B cell (primary cell): ENCODE measurements at regions of chr1 and their contacts with region 1.

Region 1: DNA sequence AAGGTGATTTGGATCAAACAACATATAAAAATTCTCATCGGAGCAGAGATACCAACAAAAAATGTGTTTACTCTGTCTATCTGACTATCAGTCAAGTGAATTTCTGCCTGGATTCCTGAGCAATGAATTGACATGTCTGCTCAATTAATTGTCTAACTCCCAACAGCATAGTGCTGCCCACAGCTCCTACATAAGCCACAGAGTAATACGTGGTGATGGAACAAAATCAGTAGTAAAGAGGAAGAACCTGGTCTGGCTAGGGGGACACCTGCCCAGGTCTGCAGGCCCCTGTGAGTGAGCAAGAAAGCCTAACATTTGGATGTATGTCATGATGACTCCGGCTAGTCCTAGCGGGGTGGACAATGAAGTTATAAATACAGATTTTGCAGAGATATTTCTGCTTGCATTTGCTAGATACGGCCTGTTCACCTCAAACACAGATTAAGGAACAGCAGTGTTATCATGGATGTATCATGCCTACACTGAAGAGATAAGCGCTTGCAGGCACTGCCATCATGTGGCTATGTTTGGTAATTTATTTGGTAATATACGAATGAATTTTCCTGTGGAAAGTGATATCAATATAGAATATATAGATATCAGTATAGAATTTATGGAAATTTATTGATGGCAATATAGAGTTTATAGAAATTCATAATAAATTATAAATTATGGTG is 69.6 kb upstream of the LRRC8B start:
- DNase-seq: peak; percentile 66
- ATAC-seq: peak; percentile 71
- H3K4me3 ChIP-seq: no peak overlapping the region
- H3K4me3 Mint-ChIP-seq: no peak overlapping the region
- H3K27ac ChIP-seq: no peak overlapping the region
- H3K27ac Mint-ChIP-seq: no peak overlapping the region
- H3K4me1 ChIP-seq: no peaks in the 10 kb centered on the region
- H3K4me1 Mint-ChIP-seq: peaks cover 2% of the 10 kb centered on the region
- H3K27me3 ChIP-seq: peaks cover 0 to 6% (median 5%) of the 10 kb centered on the region in 4 experiments
- H3K27me3 Mint-ChIP-seq: peaks cover 16% of the 10 kb centered on the region
- CTCF ChIP-seq: peak; percentile 81

Region 2: DNA sequence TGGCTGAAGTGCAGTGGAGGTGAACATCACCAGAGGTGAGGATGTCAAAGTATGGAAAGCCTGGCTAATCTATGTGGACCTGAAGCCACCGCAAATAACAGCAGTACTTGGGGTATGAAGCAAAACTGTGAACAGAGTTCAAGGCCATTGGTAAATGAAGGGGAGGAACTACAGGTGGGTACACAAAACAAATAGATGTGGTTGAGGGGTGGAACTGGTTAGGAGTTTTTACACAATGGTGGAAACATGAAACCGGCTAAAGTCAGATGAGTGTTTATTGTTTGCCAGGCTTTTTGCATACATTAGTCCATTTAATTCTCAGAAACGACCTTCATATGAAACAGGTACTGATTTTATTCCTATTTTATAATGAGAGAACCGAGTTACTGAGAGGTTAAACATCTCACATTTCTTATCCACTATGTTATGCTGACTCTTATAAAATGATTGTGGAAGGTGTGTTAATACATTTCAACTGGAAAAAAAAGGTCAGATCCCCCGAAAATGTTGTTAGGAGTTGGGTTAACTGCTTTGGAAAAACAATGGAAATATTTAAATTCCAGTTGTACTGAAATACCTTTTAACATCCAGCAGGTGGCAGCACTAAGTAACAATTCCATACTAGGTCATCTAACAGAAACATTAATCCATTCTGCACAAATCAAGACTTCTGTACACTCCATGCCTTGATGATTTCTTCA is 519.3 kb before region 1 on chr1:
- CTCF ChIA-PET with region 1: interaction called, 3 read pairs
- POLR2A ChIA-PET with region 1: no interaction called
- intact Hi-C with region 1: loop called (anchors 1 kb)
- DNase-seq: peak; percentile 55
- ATAC-seq: peak; percentile 45
- H3K4me3 ChIP-seq: no peak overlapping the region
- H3K4me3 Mint-ChIP-seq: no peak overlapping the region
- H3K27ac ChIP-seq: no peak overlapping the region
- H3K27ac Mint-ChIP-seq: no peak overlapping the region
- H3K4me1 ChIP-seq: no peaks in the 10 kb centered on the region
- H3K4me1 Mint-ChIP-seq: no peaks in the 10 kb centered on the region
- H3K27me3 ChIP-seq: no peaks in the 10 kb centered on the region
- H3K27me3 Mint-ChIP-seq: no peaks in the 10 kb centered on the region
- CTCF ChIP-seq: peak; percentile 86

Region 3: DNA sequence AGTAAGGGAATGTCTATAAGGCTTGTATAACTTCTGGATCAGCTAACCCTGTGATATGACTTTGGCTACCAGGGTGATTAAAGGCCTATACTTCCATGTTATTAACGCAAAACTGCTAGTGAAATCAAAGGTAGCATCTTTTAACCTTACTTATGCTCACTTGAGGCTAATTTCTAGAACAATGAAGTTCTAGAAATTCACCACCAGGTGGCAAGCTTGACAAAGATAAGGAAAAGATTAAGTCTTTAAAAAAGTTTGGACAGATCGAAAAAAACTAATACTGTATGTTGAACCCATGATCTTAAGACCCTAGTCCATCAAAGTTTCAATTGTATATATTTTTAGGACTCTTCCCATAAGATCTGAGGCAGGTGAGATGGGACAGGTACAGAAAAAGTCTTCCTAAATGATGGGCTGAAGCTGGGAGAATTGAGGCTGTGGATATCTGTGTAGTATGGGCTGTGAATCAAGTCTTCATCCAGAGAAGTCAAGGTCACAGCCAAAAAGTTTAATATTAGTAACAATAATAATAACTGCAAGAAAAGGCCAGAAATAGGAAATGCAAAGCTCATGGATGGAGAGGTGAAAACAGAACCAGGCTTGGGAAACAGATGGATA is 481.4 kb before region 1 on chr1:
- CTCF ChIA-PET with region 1: interaction called, 20 read pairs
- POLR2A ChIA-PET with region 1: no interaction called
- intact Hi-C with region 1: loop called (anchors 1 kb)
- DNase-seq: peak; percentile 58
- ATAC-seq: peak; percentile 31
- H3K4me3 ChIP-seq: no peak overlapping the region
- H3K4me3 Mint-ChIP-seq: no peak overlapping the region
- H3K27ac ChIP-seq: no peak overlapping the region
- H3K27ac Mint-ChIP-seq: no peak overlapping the region
- H3K4me1 ChIP-seq: peaks cover 8 to 9% of the 10 kb centered on the region in 2 donors
- H3K4me1 Mint-ChIP-seq: peaks cover 19% of the 10 kb centered on the region
- H3K27me3 ChIP-seq: no peaks in the 10 kb centered on the region
- H3K27me3 Mint-ChIP-seq: no peaks in the 10 kb centered on the region
- CTCF ChIP-seq: peak; percentile 85

Region 4: GRCh38 chr1:88983791-88984559 is 471.0 kb before region 1 on chr1:
- CTCF ChIA-PET with region 1: interaction called, 26 read pairs
- POLR2A ChIA-PET with region 1: no interaction called
- intact Hi-C with region 1: loop called (anchors 1 kb)
- DNase-seq: peak; percentile 76
- ATAC-seq: peak; percentile 77
- H3K4me3 ChIP-seq: peak overlapping the region in 3 of 5 experiments; percentile 15 to 28 (median 23)
- H3K4me3 Mint-ChIP-seq: peak overlapping the region; percentile 76
- H3K27ac ChIP-seq: peak overlapping the region; percentile 40 to 62
- H3K27ac Mint-ChIP-seq: peak overlapping the region; percentile 64
- H3K4me1 ChIP-seq: peaks cover 15 to 17% of the 10 kb centered on the region in 2 donors
- H3K4me1 Mint-ChIP-seq: peaks cover 51% of the 10 kb centered on the region
- H3K27me3 ChIP-seq: no peaks in the 10 kb centered on the region
- H3K27me3 Mint-ChIP-seq: no peaks in the 10 kb centered on the region
- CTCF ChIP-seq: peak; percentile 76

Region 5: DNA sequence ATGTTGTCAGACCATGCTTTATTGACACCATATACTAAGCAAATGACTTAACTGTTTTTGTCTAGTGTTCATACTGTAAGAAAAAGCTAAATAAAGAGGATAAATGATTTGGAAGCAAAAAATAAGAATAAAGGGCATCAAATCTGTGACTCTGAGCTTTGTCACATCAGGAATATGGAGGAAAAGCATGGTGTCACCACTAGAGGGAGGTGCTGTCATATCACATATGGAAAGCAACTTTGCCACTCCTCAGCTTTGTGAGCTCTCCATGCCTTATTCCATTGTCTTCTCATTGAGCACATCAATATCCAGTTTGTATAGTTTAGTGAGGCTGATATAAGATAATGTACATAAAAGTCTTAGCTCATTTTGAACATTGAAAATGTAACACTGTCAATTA is 369.2 kb before region 1 on chr1:
- CTCF ChIA-PET with region 1: interaction called, 15 read pairs
- POLR2A ChIA-PET with region 1: no interaction called
- intact Hi-C with region 1: no loop called
- DNase-seq: peak; percentile 38
- ATAC-seq: peak; percentile 47
- H3K4me3 ChIP-seq: no peak overlapping the region
- H3K4me3 Mint-ChIP-seq: no peak overlapping the region
- H3K27ac ChIP-seq: no peak overlapping the region
- H3K27ac Mint-ChIP-seq: no peak overlapping the region
- H3K4me1 ChIP-seq: peaks cover 7 to 9% of the 10 kb centered on the region in 2 donors
- H3K4me1 Mint-ChIP-seq: peaks cover 4% of the 10 kb centered on the region
- H3K27me3 ChIP-seq: no peaks in the 10 kb centered on the region
- H3K27me3 Mint-ChIP-seq: no peaks in the 10 kb centered on the region
- CTCF ChIP-seq: peak; percentile 82

Region 6: GRCh38 chr1:89358287-89358893 is 96.6 kb before region 1 on chr1:
- CTCF ChIA-PET with region 1: interaction called, 3 read pairs
- POLR2A ChIA-PET with region 1: no interaction called
- intact Hi-C with region 1: loop called (anchors 1 kb)
- DNase-seq: peak; percentile 83
- ATAC-seq: peak; percentile 92
- H3K4me3 ChIP-seq: no peak overlapping the region
- H3K4me3 Mint-ChIP-seq: no peak overlapping the region
- H3K27ac ChIP-seq: no peak overlapping the region
- H3K27ac Mint-ChIP-seq: no peak overlapping the region
- H3K4me1 ChIP-seq: no peaks in the 10 kb centered on the region
- H3K4me1 Mint-ChIP-seq: peaks cover 2% of the 10 kb centered on the region
- H3K27me3 ChIP-seq: no peaks in the 10 kb centered on the region
- H3K27me3 Mint-ChIP-seq: peaks cover 3% of the 10 kb centered on the region
- CTCF ChIP-seq: peak; percentile 92